Endothelial cell of umbilical vein (primary cell): ENCODE measurements at regions of chr12 and their contacts with region 1.

Region 1: DNA sequence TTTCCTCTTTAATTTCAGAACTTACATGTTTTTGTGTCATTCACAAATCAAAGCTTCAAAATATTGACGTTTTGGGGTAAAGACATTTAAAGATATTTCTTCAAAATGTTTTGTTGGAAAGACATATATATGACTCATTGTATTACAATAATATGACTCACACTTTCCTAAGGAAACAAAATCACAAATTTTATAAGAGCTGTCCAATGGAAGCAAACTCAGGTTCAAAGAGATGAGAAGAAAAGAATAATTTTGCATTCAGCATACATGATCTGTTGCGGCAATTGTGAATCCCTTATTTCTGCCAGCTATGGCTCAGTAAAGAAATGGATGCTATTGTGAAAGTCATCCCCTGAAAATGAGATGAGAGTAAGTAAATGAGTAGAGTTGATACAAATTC is 82.7 kb downstream of the GRIP1 start:
- DNase-seq: peak; percentile 71
- H3K4me3 ChIP-seq: no peak overlapping the region
- H3K27ac ChIP-seq: no peak overlapping the region
- H3K4me1 ChIP-seq: peaks cover 8% of the 10 kb centered on the region
- H3K27me3 ChIP-seq: peaks cover 0 to 4% of the 10 kb centered on the region in 2 experiments
- CTCF ChIP-seq: no peak
- POLR2A ChIP-seq: no peak

Region 2: GRCh38 chr12:65673732-65674131 is 922.5 kb before region 1 on chr12:
- CTCF ChIA-PET with region 1: no interaction called
- POLR2A ChIA-PET with region 1: no interaction called
- dilution Hi-C with region 1: no loop called
- intact Hi-C with region 1: loop called (anchors 10 kb)
- DNase-seq: peak; percentile 50
- H3K4me3 ChIP-seq: no peak overlapping the region
- H3K27ac ChIP-seq: no peak overlapping the region
- H3K4me1 ChIP-seq: peaks cover 12% of the 10 kb centered on the region
- H3K27me3 ChIP-seq: no peaks in the 10 kb centered on the region
- CTCF ChIP-seq: peak in 1 of 2 donors; percentile 2
- POLR2A ChIP-seq: no peak

Region 3: GRCh38 chr12:66636771-66637170 is 40.6 kb after region 1 on chr12:
- CTCF ChIA-PET with region 1: no interaction called
- POLR2A ChIA-PET with region 1: no interaction called
- dilution Hi-C with region 1: no loop called
- intact Hi-C with region 1: no loop called
- DNase-seq: no peak
- H3K4me3 ChIP-seq: no peak overlapping the region
- H3K27ac ChIP-seq: no peak overlapping the region
- H3K4me1 ChIP-seq: peaks cover 7% of the 10 kb centered on the region
- H3K27me3 ChIP-seq: no peaks in the 10 kb centered on the region
- CTCF ChIP-seq: no peak
- POLR2A ChIP-seq: no peak

Region 4: GRCh38 chr12:66662729-66663128 is 66.5 kb after region 1 on chr12:
- CTCF ChIA-PET with region 1: interaction called, 4 read pairs
- POLR2A ChIA-PET with region 1: no interaction called
- dilution Hi-C with region 1: no loop called
- intact Hi-C with region 1: loop called (anchors 10 kb)
- DNase-seq: peak; percentile 91
- H3K4me3 ChIP-seq: no peak overlapping the region
- H3K27ac ChIP-seq: no peak overlapping the region
- H3K4me1 ChIP-seq: peaks cover 10% of the 10 kb centered on the region
- H3K27me3 ChIP-seq: peaks cover 0 to 2% of the 10 kb centered on the region in 2 experiments
- CTCF ChIP-seq: no peak
- POLR2A ChIP-seq: no peak